ENCODE measurements at regions of chr5 and their contacts with region 1.

Region 1: DNA sequence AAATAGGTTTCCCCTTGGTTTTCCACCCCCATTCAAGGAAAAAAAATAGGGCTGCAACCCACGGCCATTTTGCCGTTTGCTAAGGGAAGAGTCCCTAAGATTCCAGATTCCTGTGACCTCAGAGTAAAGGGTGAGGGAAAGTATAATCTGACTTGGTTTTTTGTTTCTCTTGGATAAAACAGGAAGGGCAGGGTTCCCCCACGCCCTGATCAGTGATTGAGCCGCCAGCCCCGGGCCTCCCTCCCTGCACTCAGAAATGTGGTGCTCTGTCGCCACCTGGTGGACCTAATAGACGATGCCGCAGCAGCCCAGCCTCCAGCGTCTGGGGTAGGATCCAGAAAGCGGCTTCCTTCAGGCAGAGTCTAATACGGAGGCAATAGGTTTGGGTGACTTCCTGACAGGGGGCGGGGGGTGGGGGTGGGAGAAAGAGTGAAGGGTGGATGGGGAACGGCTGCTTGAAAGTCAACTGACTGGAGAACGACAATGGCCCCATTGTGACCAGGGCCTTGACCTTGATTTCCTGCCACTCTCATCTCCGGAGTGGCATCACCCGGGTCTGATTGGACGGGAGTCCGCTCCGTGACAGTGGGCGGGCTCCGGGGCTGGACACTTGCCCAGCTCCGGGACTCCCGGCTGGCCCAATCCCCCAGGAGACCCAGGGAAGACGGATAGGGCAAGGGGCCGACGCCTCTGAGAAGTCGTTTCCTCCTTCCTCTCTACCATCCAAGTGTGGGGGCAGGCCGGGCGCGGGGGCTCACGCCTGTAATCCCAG is 17.8 kb upstream of the CYSTM1 start:
- DNase-seq: peak; percentile 83 to 89
- H3K4me3 ChIP-seq: no peak overlapping the region
- H3K4me3 Mint-ChIP-seq: no peak overlapping the region
- H3K27ac Mint-ChIP-seq: no peak overlapping the region
- H3K4me1 ChIP-seq: peaks cover 6% of the 10 kb centered on the region; the same call in 1 of the 2 replicates
- H3K4me1 Mint-ChIP-seq: peaks cover 2% of the 10 kb centered on the region
- H3K27me3 ChIP-seq: no peaks in the 10 kb centered on the region
- H3K27me3 Mint-ChIP-seq: no peaks in the 10 kb centered on the region
- CTCF ChIP-seq: peak; percentile 91 to 96

Region 2: GRCh38 chr5:139863855-139864558 is 293.2 kb before region 1 on chr5:
- CTCF ChIA-PET with region 1: no interaction called
- POLR2A ChIA-PET with region 1: no interaction called
- intact Hi-C with region 1: loop called (anchors 10 kb)
- DNase-seq: peak; percentile 61 to 76
- H3K4me3 ChIP-seq: no peak overlapping the region
- H3K4me3 Mint-ChIP-seq: no peak overlapping the region
- H3K27ac Mint-ChIP-seq: no peak overlapping the region
- H3K4me1 ChIP-seq: no peaks in the 10 kb centered on the region
- H3K4me1 Mint-ChIP-seq: no peaks in the 10 kb centered on the region
- H3K27me3 ChIP-seq: no peaks in the 10 kb centered on the region; the same call in none of the 2 replicates
- H3K27me3 Mint-ChIP-seq: peaks cover 16% of the 10 kb centered on the region
- CTCF ChIP-seq: peak; percentile 82 to 88

Region 3: GRCh38 chr5:140251527-140251973 is 94.3 kb after region 1 on chr5:
- CTCF ChIA-PET with region 1: no interaction called
- POLR2A ChIA-PET with region 1: no interaction called
- intact Hi-C with region 1: no loop called
- DNase-seq: no peak
- H3K4me3 ChIP-seq: no peak overlapping the region
- H3K4me3 Mint-ChIP-seq: no peak overlapping the region
- H3K27ac Mint-ChIP-seq: no peak overlapping the region
- H3K4me1 ChIP-seq: peaks cover 18% of the 10 kb centered on the region
- H3K4me1 Mint-ChIP-seq: peaks cover 11% of the 10 kb centered on the region
- H3K27me3 ChIP-seq: no peaks in the 10 kb centered on the region
- H3K27me3 Mint-ChIP-seq: no peaks in the 10 kb centered on the region
- CTCF ChIP-seq: no peak

Measured in Caco-2 (cell line).